Transverse colon (tissue), 4 donors: ENCODE measurements at regions of chrX and their contacts with region 1.

Region 1: DNA sequence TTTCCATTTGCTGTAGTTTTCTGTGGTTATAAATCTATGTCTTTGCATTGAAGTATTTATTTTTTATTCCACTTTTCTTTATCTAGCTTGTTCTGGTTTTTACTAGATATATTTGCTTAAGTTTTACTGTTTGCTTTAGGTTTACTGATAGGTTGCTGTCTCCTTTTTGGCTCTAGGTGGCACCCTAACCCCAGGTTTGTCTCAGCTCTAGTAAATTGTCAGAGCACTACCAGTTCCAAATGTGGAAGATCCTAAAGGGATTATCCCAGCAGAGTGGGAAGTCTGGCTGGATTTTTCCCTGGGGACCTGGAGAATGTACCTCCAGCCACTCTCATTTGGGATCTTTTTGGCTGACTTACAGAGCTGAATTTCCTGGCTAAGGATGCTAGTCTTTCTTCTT is 106.1 kb downstream of the PBDC1 start:
- DNase-seq: peak; percentile 27
- H3K4me3 ChIP-seq: no peak overlapping the region
- H3K27ac ChIP-seq: no peak overlapping the region
- H3K4me1 ChIP-seq: no peaks in the 10 kb centered on the region
- H3K27me3 ChIP-seq: no peaks in the 10 kb centered on the region
- CTCF ChIP-seq: peak; percentile 32 to 51 (median 41)
- EP300 ChIP-seq: no peak
- POLR2A ChIP-seq: no peak

Region 2: GRCh38 chrX:75421688-75422230 is 857.2 kb before region 1 on chrX:
- in situ Hi-C with region 1: no loop called
- intact Hi-C with region 1: no loop called
- DNase-seq: no peak
- H3K4me3 ChIP-seq: no peak overlapping the region
- H3K27ac ChIP-seq: no peak overlapping the region
- H3K4me1 ChIP-seq: no peaks in the 10 kb centered on the region
- H3K27me3 ChIP-seq: no peaks in the 10 kb centered on the region
- CTCF ChIP-seq: no peak
- EP300 ChIP-seq: no peak
- POLR2A ChIP-seq: no peak

Region 3: GRCh38 chrX:76183289-76184049 is 95.5 kb before region 1 on chrX:
- in situ Hi-C with region 1: no loop called
- intact Hi-C with region 1: no loop called
- DNase-seq: no peak
- H3K4me3 ChIP-seq: no peak overlapping the region
- H3K27ac ChIP-seq: peak overlapping the region in 1 of 4 donors; percentile 29
- H3K4me1 ChIP-seq: peaks cover 0 to 7% (median 0%) of the 10 kb centered on the region in 4 donors
- H3K27me3 ChIP-seq: no peaks in the 10 kb centered on the region
- CTCF ChIP-seq: no peak
- EP300 ChIP-seq: no peak
- POLR2A ChIP-seq: no peak

Region 4: DNA sequence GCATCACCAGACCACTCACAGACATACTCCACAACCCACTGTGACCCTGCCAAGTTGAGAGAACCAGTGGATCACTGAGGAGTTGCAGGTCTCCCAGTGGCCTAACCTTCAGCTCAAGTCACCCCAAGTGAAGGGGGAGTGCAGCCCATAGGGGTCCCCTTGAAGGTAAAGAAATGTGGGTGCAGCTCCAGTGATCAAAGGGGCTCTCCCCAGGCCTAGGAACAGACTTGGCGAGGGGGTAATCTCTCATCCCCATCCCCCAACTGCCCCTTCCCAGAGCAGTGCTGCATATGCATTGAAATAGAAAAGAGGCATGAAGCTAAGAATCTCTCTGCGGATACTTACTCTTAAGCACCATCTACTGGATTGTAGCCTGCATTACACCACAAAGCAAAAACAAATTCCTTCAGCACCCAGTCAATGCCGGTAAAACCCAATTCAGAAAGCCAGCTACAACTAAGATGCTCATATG is 175.5 kb after region 1 on chrX:
- in situ Hi-C with region 1: loop called in 2 of 4 experiments (anchors 10 to 25 kb)
- intact Hi-C with region 1: loop called (anchors 5 kb)
- DNase-seq: no peak
- H3K4me3 ChIP-seq: no peak overlapping the region
- H3K27ac ChIP-seq: no peak overlapping the region
- H3K4me1 ChIP-seq: no peaks in the 10 kb centered on the region
- H3K27me3 ChIP-seq: no peaks in the 10 kb centered on the region
- CTCF ChIP-seq: peak; percentile 28 to 45 (median 33)
- EP300 ChIP-seq: no peak
- POLR2A ChIP-seq: no peak